Heart right ventricle (tissue), 16 donors: ENCODE measurements at regions of chr6 and their contacts with region 1.

Region 1: DNA sequence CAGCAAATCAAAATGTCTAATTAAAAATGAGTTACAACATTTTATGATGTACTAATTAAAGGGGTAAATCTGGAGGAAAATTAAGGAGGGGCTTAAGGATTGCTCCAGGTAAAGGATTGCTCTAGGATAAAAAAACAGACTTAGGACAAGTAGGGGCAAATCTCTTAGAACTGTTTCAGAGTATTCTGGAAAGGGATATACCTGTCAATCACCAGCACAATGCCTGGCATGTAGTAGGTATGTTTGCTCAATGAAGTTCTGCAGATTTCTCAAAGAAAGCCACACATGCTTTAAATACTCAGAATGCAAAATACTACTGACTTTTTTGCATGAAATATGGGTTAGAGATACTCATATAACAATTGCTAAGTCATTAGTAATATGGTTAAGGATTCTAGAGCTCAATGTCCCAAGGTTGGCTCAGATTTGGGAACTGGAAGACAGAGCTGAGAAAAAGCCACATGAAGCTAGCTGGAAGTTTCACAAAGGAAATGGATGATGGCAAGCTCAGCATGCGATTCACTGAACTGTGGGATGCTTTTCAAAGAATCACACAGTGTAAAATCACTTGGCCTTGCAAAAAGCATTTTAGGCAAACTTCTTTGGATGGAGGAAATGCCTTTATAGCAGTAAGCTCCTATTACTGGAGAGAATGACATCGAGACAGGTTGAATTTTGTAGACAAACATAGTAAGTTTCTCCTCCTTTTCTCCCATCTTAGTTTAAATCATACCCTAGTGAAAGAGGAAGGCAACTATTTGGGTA is 72.8 kb downstream of the MAP3K5 start:
- DNase-seq: no peak
- ATAC-seq: no peak
- H3K4me3 ChIP-seq: no peak overlapping the region
- H3K27ac ChIP-seq: peak overlapping the region in 3 of 10 donors; percentile 22 to 55 (median 29)
- H3K4me1 ChIP-seq: peaks cover 0 to 53% (median 25%) of the 10 kb centered on the region in 9 donors
- H3K27me3 ChIP-seq: no peaks in the 10 kb centered on the region
- CTCF ChIP-seq: no peak

Region 2: DNA sequence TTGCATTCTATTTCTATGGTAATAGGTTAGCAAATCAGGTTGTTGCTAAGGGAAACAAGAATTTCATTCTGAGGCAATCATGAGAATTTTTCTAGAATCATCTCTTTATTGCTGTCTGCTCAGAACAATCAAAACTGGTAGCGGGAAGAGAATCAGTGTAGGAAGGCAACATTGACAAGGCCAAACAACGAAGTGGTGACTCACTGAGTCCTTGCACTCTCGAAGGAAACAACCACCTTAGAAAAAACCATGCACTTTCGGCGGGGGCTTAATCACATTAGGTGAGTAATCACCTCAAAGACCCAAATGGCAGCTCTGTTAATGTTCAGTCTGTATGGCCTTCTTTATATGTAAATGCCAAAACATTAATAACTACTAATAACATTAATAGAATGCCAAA is 90.5 kb before region 1 on chr6:
- intact Hi-C with region 1: no loop called
- DNase-seq: no peak
- ATAC-seq: no peak
- H3K4me3 ChIP-seq: no peak overlapping the region
- H3K27ac ChIP-seq: no peak overlapping the region
- H3K4me1 ChIP-seq: no peaks in the 10 kb centered on the region
- H3K27me3 ChIP-seq: no peaks in the 10 kb centered on the region
- CTCF ChIP-seq: no peak

Region 3: DNA sequence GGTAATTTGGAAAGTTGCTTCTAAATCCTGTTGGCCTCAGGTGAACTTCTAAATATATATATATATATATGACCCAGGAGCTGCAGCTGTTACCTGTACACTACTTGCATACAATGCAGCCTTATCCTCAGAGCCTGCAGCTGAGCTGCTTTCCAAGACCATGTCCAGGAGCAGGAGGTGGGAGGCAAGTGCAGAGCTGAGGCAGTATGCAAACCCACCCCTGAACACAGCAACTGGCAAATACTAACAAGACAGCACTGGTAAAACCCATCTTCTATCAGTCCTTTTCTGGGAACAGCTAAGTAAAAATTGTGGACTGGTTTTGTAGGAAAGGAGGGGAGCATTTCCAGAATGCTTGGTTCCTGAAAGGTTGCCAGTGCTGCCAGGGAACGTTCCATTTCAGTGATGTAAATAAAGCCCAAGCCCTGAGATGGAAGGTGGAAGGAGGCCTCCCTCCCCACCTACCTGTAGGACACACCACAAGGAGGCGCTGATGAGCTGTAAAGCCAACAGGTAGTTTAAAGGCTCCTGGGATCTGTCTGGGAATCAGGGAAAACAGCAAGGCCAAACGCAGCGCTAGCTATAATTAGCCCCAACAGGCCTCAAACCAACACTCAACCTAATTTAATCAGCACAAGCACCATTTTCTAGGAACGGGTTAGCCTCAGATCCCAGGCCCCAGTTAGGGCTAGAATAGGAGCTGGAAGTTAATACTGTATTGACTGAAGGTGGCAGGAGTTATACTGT is 75.4 kb before region 1 on chr6:
- intact Hi-C with region 1: loop called in 2 of 10 experiments (anchors 2 to 10 kb)
- DNase-seq: peak; percentile 84 to 93
- ATAC-seq: peak; percentile 86 to 98 (median 95)
- H3K4me3 ChIP-seq: no peak overlapping the region
- H3K27ac ChIP-seq: peak overlapping the region in 9 of 10 donors; percentile 26 to 73 (median 55)
- H3K4me1 ChIP-seq: peaks cover 8 to 55% (median 41%) of the 10 kb centered on the region in 9 donors
- H3K27me3 ChIP-seq: no peaks in the 10 kb centered on the region
- CTCF ChIP-seq: peak; percentile 56 to 93 (median 89)

Region 4: GRCh38 chr6:136783495-136784270 is 64.2 kb after region 1 on chr6:
- intact Hi-C with region 1: loop called in 2 of 10 experiments (anchors 5 to 10 kb)
- DNase-seq: peak; percentile 21 to 27
- ATAC-seq: peak in 7 of 8 donors; percentile 31 to 75 (median 68)
- H3K4me3 ChIP-seq: peak overlapping the region in 5 of 10 donors; percentile 7 to 34 (median 20)
- H3K27ac ChIP-seq: peak overlapping the region in 8 of 10 donors; percentile 6 to 97 (median 36)
- H3K4me1 ChIP-seq: peaks cover 5 to 87% (median 68%) of the 10 kb centered on the region in 9 donors
- H3K27me3 ChIP-seq: no peaks in the 10 kb centered on the region
- CTCF ChIP-seq: no peak